Activated CD8-positive, alpha-beta memory T cell treated with anti-CD3 and anti-CD28 coated beads, Interleukin-2, amount 10 ng/mL, durations not matched to agents 7 days and 5 days (primary cell): ENCODE measurements at regions of chr4 and their contacts with region 1.

Region 1: DNA sequence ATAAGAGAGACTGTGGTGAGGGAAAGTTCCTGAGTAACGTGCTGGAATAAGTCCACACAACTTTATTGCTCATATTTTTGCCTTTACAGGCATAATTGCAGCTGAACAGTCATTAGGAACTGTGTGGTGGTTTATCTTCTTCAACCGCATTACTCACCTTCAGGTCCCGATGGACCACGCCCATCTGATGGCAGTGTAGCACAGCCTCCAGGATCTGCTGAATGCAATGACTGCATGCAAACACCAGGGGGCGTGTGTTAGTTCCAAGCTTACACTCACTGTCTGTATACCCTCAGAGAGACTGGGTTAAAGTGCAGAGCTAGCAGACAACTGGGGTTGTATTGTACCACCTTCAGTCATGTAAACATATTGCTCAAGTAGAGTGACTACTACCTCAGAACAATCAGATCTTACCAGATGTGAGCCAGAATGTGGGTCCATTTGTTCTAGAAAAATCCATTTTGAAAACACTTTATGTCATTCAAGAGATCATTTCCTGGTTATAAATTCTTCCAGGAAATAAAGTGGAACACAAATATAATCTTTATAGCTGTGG is 214.0 kb downstream of the CAMK2D start:
- DNase-seq: peak; percentile 96
- ATAC-seq: peak; percentile 98
- H3K4me3 Mint-ChIP-seq: no peak overlapping the region
- H3K27ac Mint-ChIP-seq: peak overlapping the region; percentile 24
- H3K4me1 Mint-ChIP-seq: peaks cover 18% of the 10 kb centered on the region
- H3K27me3 Mint-ChIP-seq: no peaks in the 10 kb centered on the region

Region 2: GRCh38 chr4:113564493-113564892 is 16.9 kb after region 1 on chr4:
- CTCF ChIA-PET with region 1: interaction called, 12 read pairs
- DNase-seq: no peak
- ATAC-seq: no peak
- H3K4me3 Mint-ChIP-seq: no peak overlapping the region
- H3K27ac Mint-ChIP-seq: peak overlapping the region; percentile 77
- H3K4me1 Mint-ChIP-seq: peaks cover 37% of the 10 kb centered on the region
- H3K27me3 Mint-ChIP-seq: no peaks in the 10 kb centered on the region

Region 3: GRCh38 chr4:113760795-113761619 is 213.4 kb after region 1 on chr4:
- CTCF ChIA-PET with region 1: interaction called, 17 read pairs
- DNase-seq: peak; percentile 69
- ATAC-seq: peak; percentile 31
- H3K4me3 Mint-ChIP-seq: peak overlapping the region; percentile 89
- H3K27ac Mint-ChIP-seq: peak overlapping the region; percentile 100
- H3K4me1 Mint-ChIP-seq: peaks cover 41% of the 10 kb centered on the region
- H3K27me3 Mint-ChIP-seq: peaks cover 3% of the 10 kb centered on the region